Psoas muscle (tissue), 8 donors: ENCODE measurements at regions of chr7 and their contacts with region 1.

Region 1: DNA sequence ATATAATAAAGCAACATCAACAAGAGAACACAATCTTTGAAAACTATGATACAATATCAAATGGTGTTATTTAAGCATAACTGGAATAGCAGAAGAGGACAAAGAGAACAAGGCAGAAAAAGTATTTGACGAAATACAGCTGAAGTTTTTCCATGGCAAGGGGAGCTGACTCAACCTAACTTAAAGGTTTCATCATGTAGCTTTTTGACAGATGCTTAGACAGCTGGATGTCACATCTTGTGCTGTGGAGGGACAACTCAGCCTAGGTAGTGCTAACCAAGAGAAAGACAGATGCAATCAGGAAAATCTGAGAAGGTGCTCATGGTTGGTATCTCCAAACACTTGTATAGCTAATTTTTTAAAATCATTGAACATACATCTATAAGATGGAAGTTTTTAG is 208.2 kb downstream of the TFEC start:
- DNase-seq: no peak
- ATAC-seq: no peak
- H3K4me3 ChIP-seq: no peak overlapping the region
- H3K27ac ChIP-seq: no peak overlapping the region
- H3K4me1 ChIP-seq: no peaks in the 10 kb centered on the region
- H3K27me3 ChIP-seq: no peaks in the 10 kb centered on the region
- CTCF ChIP-seq: no peak

Region 2: GRCh38 chr7:117674617-117675016 is 1852.2 kb after region 1 on chr7:
- intact Hi-C with region 1: loop called in 1 of 2 experiments (anchors 5 kb)
- DNase-seq: no peak
- ATAC-seq: no peak
- H3K4me3 ChIP-seq: no peak overlapping the region
- H3K27ac ChIP-seq: no peak overlapping the region
- H3K4me1 ChIP-seq: no peaks in the 10 kb centered on the region
- H3K27me3 ChIP-seq: no peaks in the 10 kb centered on the region
- CTCF ChIP-seq: no peak